BJ (cell line): ENCODE measurements at regions of chr5 and their contacts with region 1.

Region 1: GRCh38 chr5:153299891-153300290 is 190.6 kb upstream of the GRIA1 start:
- DNase-seq: no peak
- H3K4me3 ChIP-seq: no peak overlapping the region
- H3K27me3 ChIP-seq: no peaks in the 10 kb centered on the region
- CTCF ChIP-seq: no peak

Region 2: GRCh38 chr5:153402550-153402949 is 102.7 kb after region 1 on chr5:
- CTCF ChIA-PET with region 1: no interaction called
- POLR2A ChIA-PET with region 1: no interaction called
- DNase-seq: peak; percentile 67
- H3K4me3 ChIP-seq: no peak overlapping the region
- H3K27me3 ChIP-seq: no peaks in the 10 kb centered on the region
- CTCF ChIP-seq: no peak

Region 3: GRCh38 chr5:153782589-153783361 is 482.9 kb after region 1 on chr5:
- CTCF ChIA-PET with region 1: no interaction called
- POLR2A ChIA-PET with region 1: interaction called, 10 read pairs
- DNase-seq: no peak
- H3K4me3 ChIP-seq: no peak overlapping the region
- H3K27me3 ChIP-seq: no peaks in the 10 kb centered on the region
- CTCF ChIP-seq: no peak